Aorta (tissue), 5 donors: ENCODE measurements at regions of chr10 and their contacts with region 1.

Region 1: GRCh38 chr10:72331601-72332422 is 22.9 kb downstream of the DNAJB12 start:
- DNase-seq: peak; percentile 93 to 95
- ATAC-seq: peak; percentile 69
- H3K4me3 ChIP-seq: no peak overlapping the region
- H3K27ac ChIP-seq: no peak overlapping the region
- H3K4me1 ChIP-seq: no peaks in the 10 kb centered on the region
- H3K27me3 ChIP-seq: no peaks in the 10 kb centered on the region

Region 2: DNA sequence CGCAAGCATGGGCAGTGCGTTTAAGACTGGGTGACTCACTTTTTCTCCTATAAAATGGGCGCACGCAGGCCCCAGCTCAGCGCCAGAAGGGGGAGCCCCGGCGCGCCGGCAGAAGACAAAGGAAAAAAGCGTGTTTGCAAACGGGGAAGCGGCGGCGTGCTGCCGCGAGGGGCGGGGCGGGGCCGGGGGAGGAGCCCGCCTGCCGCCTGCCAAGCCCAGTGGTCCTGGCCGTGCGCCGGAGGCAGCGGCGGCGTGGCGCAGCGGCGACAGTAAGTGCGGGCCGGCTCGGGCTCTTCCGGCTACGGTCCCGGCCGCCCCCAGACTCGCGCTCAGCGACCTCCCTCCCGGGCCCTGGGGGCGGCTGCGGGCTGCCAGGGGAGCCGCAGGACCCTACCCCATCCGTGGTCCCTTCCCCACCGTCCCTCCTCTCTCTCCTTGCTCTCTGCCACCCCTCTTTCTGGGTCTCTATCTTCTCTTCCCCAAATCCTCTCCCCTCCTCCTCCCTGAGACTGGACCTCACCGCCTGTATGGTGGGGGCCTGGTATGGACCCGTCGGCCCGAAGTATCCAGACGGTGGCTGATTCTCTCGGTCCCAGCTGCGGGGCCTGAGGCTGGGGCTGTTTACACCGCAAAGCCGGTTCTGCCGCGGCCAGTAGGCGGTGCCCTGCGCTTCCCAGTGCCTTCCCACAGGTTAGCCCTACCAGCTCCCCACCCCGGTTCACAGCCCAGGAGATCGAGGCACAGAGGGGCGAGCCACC is 1012.6 kb before region 1 on chr10 and contains the start of gene SLC29A3:
- intact Hi-C with region 1: loop called in 1 of 2 experiments (anchors 10 kb)
- DNase-seq: peak; percentile 88 to 92
- ATAC-seq: peak; percentile 91
- H3K4me3 ChIP-seq: peak within 1 kb of the TSS; percentile 8 to 67
- H3K27ac ChIP-seq: no peak within 1 kb of the TSS
- H3K4me1 ChIP-seq: peaks cover 0 to 1% of the 10 kb centered on the region in 2 donors
- H3K27me3 ChIP-seq: no peaks in the 10 kb centered on the region
- total RNA-seq, gene SLC29A3: 5.3 to 8.8 TPM

Region 3: DNA sequence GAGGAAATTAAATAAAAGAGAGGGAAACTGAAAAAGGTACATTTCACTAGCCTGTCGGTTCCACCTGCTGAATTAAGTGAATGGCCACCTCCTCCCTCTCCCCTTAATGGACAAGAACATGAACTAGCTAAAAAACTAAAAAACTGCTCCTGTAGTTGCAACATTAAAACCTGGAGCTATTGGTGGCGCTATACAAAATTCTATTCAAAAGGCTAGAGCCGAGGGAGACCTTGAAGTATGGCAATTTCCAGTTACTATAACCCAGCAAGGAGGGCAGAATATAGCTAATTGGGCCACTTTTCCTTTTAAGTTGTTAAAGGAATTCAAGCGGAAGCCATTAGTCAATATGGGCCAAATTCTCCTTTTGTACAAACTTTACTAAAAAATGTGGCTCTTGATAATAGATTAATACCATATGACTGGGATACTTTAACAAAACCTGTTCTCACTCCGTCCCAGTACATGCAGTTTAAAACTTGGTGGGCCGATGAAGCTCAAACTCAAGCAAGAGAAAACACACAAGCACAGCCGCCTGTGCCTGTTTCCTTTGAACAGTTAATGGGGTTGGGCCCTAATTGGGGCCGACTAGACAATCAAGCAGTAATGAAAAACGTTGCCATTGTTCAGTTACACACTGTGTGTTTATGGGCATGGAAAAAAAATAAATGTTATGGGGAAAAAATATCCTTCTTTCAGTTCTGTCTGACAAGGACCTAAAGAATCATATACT is 374.1 kb before region 1 on chr10:
- intact Hi-C with region 1: loop called (anchors 5 kb)
- DNase-seq: no peak
- ATAC-seq: no peak
- H3K4me3 ChIP-seq: no peak overlapping the region
- H3K27ac ChIP-seq: no peak overlapping the region
- H3K4me1 ChIP-seq: no peaks in the 10 kb centered on the region
- H3K27me3 ChIP-seq: no peaks in the 10 kb centered on the region

Region 4: GRCh38 chr10:72048450-72049124 is 283.2 kb before region 1 on chr10:
- intact Hi-C with region 1: loop called (anchors 2 to 5 kb)
- DNase-seq: peak; percentile 92 to 97
- ATAC-seq: peak; percentile 95
- H3K4me3 ChIP-seq: no peak overlapping the region
- H3K27ac ChIP-seq: no peak overlapping the region
- H3K4me1 ChIP-seq: no peaks in the 10 kb centered on the region
- H3K27me3 ChIP-seq: no peaks in the 10 kb centered on the region

Region 5: GRCh38 chr10:72133517-72133916 is 198.3 kb before region 1 on chr10:
- intact Hi-C with region 1: loop called in 1 of 2 experiments (anchors 5 kb)
- DNase-seq: no peak
- ATAC-seq: no peak
- H3K4me3 ChIP-seq: no peak overlapping the region
- H3K27ac ChIP-seq: no peak overlapping the region
- H3K4me1 ChIP-seq: no peaks in the 10 kb centered on the region
- H3K27me3 ChIP-seq: no peaks in the 10 kb centered on the region

Region 6: GRCh38 chr10:72215652-72216549 is 115.9 kb before region 1 on chr10 and contains the starts of genes ANAPC16 and ASCC1:
- intact Hi-C with region 1: loop called (anchors 5 kb)
- DNase-seq: peak; percentile 95 to 97
- ATAC-seq: peak; percentile 99
- H3K4me3 ChIP-seq: peak within 1 kb of the TSS; percentile 86 to 98
- H3K27ac ChIP-seq: peak within 1 kb of the TSS; percentile 88 to 98
- H3K4me1 ChIP-seq: peaks cover 0 to 3% of the 10 kb centered on the region in 2 donors
- H3K27me3 ChIP-seq: no peaks in the 10 kb centered on the region
- total RNA-seq, gene ANAPC16: 70.7 to 75.7 TPM
- total RNA-seq, gene ASCC1: 23.3 to 32.3 TPM

Region 7: DNA sequence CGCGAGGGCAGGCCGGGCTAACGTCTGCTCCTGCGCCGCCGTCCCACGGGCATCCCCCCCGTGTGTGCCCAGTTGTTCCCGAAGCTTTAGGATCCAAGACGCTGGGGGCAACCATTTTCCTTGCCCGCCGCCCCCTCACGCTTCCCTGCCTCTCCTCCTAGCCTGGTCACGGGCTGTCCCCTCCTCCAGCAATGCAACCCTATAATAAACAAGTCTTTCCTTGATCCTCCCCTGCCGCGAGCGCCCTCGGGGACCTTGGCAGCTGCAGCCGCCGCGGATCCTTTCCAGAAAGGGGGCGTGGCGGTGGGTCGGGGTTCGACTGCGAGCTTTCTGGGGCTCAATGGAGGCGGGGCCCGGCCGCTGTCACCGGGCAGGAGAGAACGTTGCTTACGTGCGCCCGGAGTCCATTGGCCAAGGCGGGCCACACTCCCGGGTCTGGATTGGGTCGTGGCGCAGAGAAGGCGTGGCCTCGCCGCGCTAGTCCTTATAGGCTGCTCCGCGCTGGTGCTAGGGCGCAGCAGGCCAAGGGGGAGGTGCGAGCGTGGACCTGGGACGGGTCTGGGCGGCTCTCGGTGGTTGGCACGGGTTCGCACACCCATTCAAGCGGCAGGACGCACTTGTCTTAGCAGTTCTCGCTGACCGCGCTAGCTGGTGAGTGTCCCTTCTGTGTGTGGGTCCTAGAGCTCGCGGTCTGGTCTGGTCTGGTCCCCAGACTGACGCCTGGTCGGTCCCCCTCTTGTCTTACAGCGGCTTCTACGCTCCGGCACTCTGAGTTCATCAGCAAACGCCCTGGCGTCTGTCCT is 58.2 kb before region 1 on chr10 and contains the start of gene DDIT4:
- intact Hi-C with region 1: loop called (anchors 1 to 5 kb)
- DNase-seq: peak; percentile 100
- ATAC-seq: peak; percentile 95
- H3K4me3 ChIP-seq: peak within 1 kb of the TSS; percentile 37 to 52
- H3K27ac ChIP-seq: peak within 1 kb of the TSS in 1 of 2 donors; percentile 78
- H3K4me1 ChIP-seq: no peaks in the 10 kb centered on the region
- H3K27me3 ChIP-seq: peaks cover 0 to 2% of the 10 kb centered on the region in 2 donors
- total RNA-seq, gene DDIT4: 104 to 126 TPM